CD4-positive, alpha-beta T cell (primary cell): ENCODE measurements at regions of chr16 and their contacts with region 1.

Region 1: DNA sequence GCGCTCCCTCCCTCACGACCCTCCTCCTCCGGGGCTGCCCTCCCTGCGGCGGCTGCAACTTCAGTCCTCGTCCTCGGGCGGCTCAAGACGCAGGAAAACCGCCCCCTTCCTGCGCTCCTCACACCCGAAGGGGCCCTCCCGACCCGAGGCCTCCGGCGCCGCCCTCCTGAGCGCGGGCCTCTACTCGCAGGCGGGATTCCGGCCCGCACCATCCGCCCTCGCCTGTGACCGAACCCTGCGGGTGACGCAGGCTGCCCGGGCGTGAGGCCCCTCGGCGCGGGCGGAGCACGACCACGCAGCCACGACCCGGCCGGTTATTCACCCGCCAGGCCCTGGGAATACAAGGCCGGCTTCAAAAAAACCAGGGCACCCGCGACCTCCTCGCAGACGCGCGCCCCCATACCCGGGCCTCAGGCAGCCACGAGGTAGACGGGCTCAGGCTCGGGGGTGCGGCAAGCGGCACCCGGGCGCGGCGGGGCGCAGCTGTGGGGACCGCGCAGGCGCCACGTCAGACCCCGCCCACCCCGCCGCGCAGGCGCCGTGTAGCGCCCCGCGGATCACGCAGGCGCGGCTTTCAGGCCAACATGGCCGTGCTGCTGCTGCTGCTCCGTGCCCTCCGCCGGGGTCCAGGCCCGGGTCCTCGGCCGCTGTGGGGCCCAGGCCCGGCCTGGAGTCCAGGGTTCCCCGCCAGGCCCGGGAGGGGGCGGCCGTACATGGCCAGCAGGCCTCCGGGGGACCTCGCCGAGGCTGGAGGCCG is at the start of gene SPG7:
- DNase-seq: peak; percentile 81 to 97 (median 90)
- ATAC-seq: peak; percentile 71
- H3K4me3 ChIP-seq: peak within 1 kb of the TSS; percentile 73
- H3K4me3 Mint-ChIP-seq: peak within 1 kb of the TSS; percentile 95
- H3K27ac ChIP-seq: peak within 1 kb of the TSS; percentile 79 to 81
- H3K27ac Mint-ChIP-seq: peak within 1 kb of the TSS; percentile 93
- H3K4me1 ChIP-seq: peaks cover 47% of the 10 kb centered on the region
- H3K4me1 Mint-ChIP-seq: peaks cover 42% of the 10 kb centered on the region
- H3K27me3 ChIP-seq: no peaks in the 10 kb centered on the region
- H3K27me3 Mint-ChIP-seq: no peaks in the 10 kb centered on the region
- CTCF ChIP-seq: no peak
- total RNA-seq, gene SPG7: 163 to 167 TPM

Region 2: DNA sequence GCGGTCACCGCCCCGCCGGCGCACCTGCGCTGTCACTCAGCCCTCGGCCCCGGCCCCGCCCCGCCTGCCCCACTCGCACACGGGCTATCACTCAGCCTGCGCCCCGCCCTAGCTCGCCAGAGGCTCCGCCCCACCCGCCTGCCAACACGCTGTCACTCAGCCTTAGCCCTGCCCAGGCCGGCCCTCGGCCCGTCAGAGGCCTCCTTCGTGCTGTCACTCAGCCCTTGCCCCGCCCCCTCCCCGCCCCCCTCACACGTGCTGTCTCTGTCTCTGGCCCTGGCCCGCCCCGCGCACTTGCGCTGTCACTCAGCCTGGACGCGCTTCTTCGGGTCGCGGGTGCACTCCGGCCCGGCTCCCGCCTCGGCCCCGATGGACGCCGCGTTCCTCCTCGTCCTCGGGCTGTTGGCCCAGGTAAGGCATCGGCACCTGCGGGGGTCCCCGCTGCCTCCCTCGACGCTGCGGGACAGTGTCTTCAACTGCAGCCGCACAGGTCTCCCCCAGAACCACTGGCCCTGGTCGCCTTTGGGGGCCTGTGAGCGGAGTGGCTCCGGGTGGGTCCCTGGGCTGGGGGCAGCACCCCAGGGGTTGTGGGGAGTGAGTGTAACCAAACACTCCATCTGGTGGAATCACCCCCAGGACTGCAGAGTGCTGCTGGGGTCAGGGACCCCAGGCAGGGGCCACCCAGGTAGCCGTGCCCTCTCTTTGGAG is 336.4 kb before region 1 on chr16 and contains the start of gene CDH15:
- CTCF ChIA-PET with region 1: no interaction called
- POLR2A ChIA-PET with region 1: no interaction called
- intact Hi-C with region 1: no loop called
- DNase-seq: peak; percentile 92 to 99 (median 95)
- ATAC-seq: peak; percentile 96
- H3K4me3 ChIP-seq: peak within 1 kb of the TSS; percentile 53
- H3K4me3 Mint-ChIP-seq: peak within 1 kb of the TSS; percentile 79
- H3K27ac ChIP-seq: no peak within 1 kb of the TSS
- H3K27ac Mint-ChIP-seq: no peak within 1 kb of the TSS
- H3K4me1 ChIP-seq: peaks cover 30% of the 10 kb centered on the region
- H3K4me1 Mint-ChIP-seq: peaks cover 8% of the 10 kb centered on the region
- H3K27me3 ChIP-seq: no peaks in the 10 kb centered on the region
- H3K27me3 Mint-ChIP-seq: peaks cover 4% of the 10 kb centered on the region
- CTCF ChIP-seq: no peak
- total RNA-seq, gene CDH15: not detected

Region 3: DNA sequence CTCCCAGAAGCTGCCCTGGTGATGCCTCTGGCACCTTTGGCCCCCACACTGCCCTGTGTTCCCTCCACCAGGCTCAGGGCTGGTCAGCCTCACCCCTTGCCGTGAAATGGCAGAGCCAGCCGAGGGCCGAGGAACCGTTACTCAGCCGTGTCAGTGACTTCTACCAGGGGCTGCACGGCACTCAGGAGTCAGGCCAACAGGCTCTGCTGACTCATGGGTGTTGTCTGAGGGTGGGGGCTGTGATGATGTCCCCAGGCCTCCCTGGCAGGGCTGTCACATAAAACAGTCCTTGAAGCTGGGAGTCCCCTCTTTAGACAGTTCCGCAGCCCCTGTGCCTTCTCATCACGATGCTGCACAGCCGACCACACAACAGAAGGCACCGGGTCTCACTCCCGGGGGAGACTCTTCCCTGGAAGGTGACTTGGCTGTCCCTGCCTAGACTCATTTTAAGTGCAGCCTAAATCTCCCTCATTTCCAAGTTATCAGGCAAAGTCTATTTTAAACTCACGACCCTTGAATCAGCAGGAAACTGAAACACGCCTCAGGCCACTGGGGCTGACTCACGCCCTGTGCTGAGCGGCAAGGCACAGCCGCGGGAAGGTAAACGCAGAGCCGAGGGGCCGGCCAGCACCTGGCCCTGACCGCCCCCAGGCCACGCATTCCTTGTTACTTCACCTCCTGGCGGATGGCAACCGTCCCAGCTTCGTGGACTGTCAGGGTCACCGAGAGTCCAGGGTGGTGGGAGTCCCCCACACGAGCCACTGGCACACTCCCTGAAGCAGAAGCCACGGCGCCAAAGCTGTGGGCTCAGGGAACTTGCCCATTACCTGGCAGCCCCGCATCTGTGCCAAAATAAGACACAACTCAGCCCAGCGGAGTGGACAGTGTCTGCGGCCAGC is 187.9 kb before region 1 on chr16:
- CTCF ChIA-PET with region 1: interaction called, 6 read pairs
- POLR2A ChIA-PET with region 1: interaction called, 16 read pairs
- intact Hi-C with region 1: loop called in 1 of 2 experiments (anchors 1 kb)
- DNase-seq: peak in 5 of 14 experiments; percentile 21 to 55 (median 45)
- ATAC-seq: no peak
- H3K4me3 ChIP-seq: no peak overlapping the region
- H3K4me3 Mint-ChIP-seq: peak overlapping the region; percentile 38
- H3K27ac ChIP-seq: no peak overlapping the region
- H3K27ac Mint-ChIP-seq: peak overlapping the region; percentile 98
- H3K4me1 ChIP-seq: peaks cover 100% of the 10 kb centered on the region
- H3K4me1 Mint-ChIP-seq: peaks cover 91% of the 10 kb centered on the region
- H3K27me3 ChIP-seq: no peaks in the 10 kb centered on the region
- H3K27me3 Mint-ChIP-seq: no peaks in the 10 kb centered on the region
- CTCF ChIP-seq: no peak

Region 4: DNA sequence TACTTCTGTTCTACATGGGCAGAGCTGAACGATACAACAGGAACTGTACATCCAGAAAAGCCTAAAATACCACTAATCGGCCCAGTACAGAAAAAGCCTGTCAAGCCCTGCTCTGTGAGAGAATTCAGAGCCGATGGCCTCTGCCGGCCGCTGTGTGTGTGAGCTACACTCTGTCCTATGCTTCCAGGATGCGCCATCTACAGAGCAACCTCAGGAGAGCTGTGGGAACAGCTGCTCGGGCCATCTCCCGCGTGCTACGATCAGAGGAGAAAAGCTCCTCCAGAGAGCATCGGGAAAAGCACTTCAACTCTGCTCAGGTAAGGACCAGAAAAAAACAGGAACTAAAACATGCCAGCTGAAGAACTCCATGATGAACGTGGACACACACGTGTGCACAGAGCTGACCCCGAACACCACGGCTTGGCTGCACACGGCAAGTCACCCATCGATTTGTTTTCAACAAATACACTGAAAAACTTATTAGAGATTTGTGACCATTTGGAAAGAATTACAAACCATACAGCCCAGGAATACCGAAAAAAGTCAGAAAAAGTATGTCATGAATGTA is 133.5 kb before region 1 on chr16:
- CTCF ChIA-PET with region 1: no interaction called
- POLR2A ChIA-PET with region 1: no interaction called
- intact Hi-C with region 1: no loop called
- DNase-seq: no peak
- ATAC-seq: no peak
- H3K4me3 ChIP-seq: no peak overlapping the region
- H3K4me3 Mint-ChIP-seq: no peak overlapping the region
- H3K27ac ChIP-seq: no peak overlapping the region
- H3K27ac Mint-ChIP-seq: peak overlapping the region; percentile 55
- H3K4me1 ChIP-seq: peaks cover 73% of the 10 kb centered on the region
- H3K4me1 Mint-ChIP-seq: peaks cover 89% of the 10 kb centered on the region
- H3K27me3 ChIP-seq: no peaks in the 10 kb centered on the region
- H3K27me3 Mint-ChIP-seq: no peaks in the 10 kb centered on the region
- CTCF ChIP-seq: no peak

Region 5: DNA sequence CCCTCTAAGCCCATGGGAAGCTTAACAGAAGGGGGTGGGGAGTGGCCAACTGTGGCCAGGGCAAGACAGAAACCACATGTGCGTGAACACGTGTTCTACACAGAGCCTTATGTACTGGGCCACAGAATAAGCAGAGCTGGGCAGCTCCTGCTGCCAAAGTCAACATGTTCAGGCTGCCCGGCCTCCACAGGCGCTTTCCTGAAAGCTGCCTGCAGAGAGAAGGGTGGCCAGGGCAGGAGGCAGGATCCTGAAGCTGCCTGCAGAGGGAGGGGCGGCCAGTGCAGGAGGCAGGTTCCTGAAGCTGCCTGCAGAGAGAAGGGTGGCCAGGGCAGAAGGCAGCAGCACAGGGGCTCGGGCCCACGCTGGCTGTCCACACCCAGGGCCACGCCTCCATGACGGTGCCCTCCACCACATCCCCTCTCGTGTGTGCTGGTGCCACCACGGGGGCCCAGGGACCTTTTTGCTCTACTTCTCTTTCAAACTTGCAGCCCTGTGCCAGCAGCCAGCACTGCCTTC is 97.2 kb before region 1 on chr16:
- CTCF ChIA-PET with region 1: interaction called, 8 read pairs
- POLR2A ChIA-PET with region 1: interaction called, 3 read pairs
- intact Hi-C with region 1: loop called in 1 of 2 experiments (anchors 1 kb)
- DNase-seq: peak in 5 of 14 experiments; percentile 28 to 54 (median 34)
- ATAC-seq: no peak
- H3K4me3 ChIP-seq: no peak overlapping the region
- H3K4me3 Mint-ChIP-seq: peak overlapping the region; percentile 54
- H3K27ac ChIP-seq: peak overlapping the region; percentile 34 to 69
- H3K27ac Mint-ChIP-seq: peak overlapping the region; percentile 95
- H3K4me1 ChIP-seq: peaks cover 92% of the 10 kb centered on the region
- H3K4me1 Mint-ChIP-seq: peaks cover 87% of the 10 kb centered on the region
- H3K27me3 ChIP-seq: no peaks in the 10 kb centered on the region
- H3K27me3 Mint-ChIP-seq: no peaks in the 10 kb centered on the region
- CTCF ChIP-seq: no peak

Region 6: GRCh38 chr16:89422527-89422904 is 85.5 kb before region 1 on chr16:
- CTCF ChIA-PET with region 1: no interaction called
- POLR2A ChIA-PET with region 1: no interaction called
- intact Hi-C with region 1: no loop called
- DNase-seq: peak in 3 of 14 experiments; percentile 51 to 72 (median 57)
- ATAC-seq: peak; percentile 23
- H3K4me3 ChIP-seq: no peak overlapping the region
- H3K4me3 Mint-ChIP-seq: peak overlapping the region; percentile 39
- H3K27ac ChIP-seq: no peak overlapping the region
- H3K27ac Mint-ChIP-seq: peak overlapping the region; percentile 45
- H3K4me1 ChIP-seq: peaks cover 86% of the 10 kb centered on the region
- H3K4me1 Mint-ChIP-seq: peaks cover 86% of the 10 kb centered on the region
- H3K27me3 ChIP-seq: no peaks in the 10 kb centered on the region
- H3K27me3 Mint-ChIP-seq: no peaks in the 10 kb centered on the region
- CTCF ChIP-seq: no peak

Region 7: GRCh38 chr16:89484923-89485679 is 22.9 kb before region 1 on chr16:
- CTCF ChIA-PET with region 1: interaction called, 7 read pairs
- POLR2A ChIA-PET with region 1: interaction called, 40 read pairs
- intact Hi-C with region 1: loop called (anchors 1 kb)
- DNase-seq: peak in 5 of 14 experiments; percentile 15 to 70 (median 60)
- ATAC-seq: no peak
- H3K4me3 ChIP-seq: peak overlapping the region; percentile 24
- H3K4me3 Mint-ChIP-seq: peak overlapping the region; percentile 89
- H3K27ac ChIP-seq: peak overlapping the region; percentile 25 to 79
- H3K27ac Mint-ChIP-seq: peak overlapping the region; percentile 97
- H3K4me1 ChIP-seq: peaks cover 81% of the 10 kb centered on the region
- H3K4me1 Mint-ChIP-seq: peaks cover 89% of the 10 kb centered on the region
- H3K27me3 ChIP-seq: no peaks in the 10 kb centered on the region
- H3K27me3 Mint-ChIP-seq: no peaks in the 10 kb centered on the region
- CTCF ChIP-seq: no peak

Region 8: DNA sequence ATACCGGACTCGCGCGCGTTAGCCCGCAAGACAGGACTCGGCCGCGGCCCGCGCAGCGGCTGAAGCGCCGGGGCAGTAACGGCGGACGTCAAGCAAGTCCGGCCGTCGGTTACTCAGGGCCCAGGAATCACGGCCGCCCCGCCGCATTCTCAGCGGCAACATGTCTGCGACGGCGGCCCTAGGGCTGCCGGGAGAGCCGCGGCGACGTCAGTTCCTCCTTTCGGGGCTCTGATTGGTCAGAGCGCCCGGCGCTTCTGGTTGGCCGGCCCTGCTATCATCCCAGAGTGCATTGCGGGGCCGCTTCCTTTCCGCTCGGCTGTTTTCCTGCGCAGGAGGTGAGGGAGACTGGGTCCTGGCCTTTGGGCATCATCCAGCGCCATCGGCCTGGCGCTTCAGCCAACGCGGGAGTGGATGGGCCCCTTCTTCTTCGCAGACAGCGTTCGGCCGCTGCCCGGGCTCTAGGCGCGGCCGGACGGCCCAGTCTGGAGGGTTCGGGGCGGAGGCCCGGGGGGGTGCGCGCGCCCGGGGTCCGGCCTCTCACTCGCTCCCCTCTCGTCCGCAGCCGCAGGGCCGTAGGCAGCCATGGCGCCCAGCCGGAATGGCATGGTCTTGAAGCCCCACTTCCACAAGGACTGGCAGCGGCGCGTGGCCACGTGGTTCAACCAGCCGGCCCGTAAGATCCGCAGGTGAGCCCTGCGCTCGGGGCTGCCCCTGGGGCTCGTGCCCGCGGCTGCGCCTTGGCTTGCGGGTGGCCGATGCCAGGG is 52.5 kb after region 1 on chr16 and contains the start of gene RPL13:
- CTCF ChIA-PET with region 1: interaction called, 8 read pairs
- POLR2A ChIA-PET with region 1: interaction called, 5 read pairs
- intact Hi-C with region 1: loop called (anchors 1 kb)
- DNase-seq: peak; percentile 86 to 97 (median 91)
- ATAC-seq: peak; percentile 88
- H3K4me3 ChIP-seq: peak within 1 kb of the TSS; percentile 75
- H3K4me3 Mint-ChIP-seq: peak within 1 kb of the TSS; percentile 97
- H3K27ac ChIP-seq: peak within 1 kb of the TSS; percentile 82 to 90
- H3K27ac Mint-ChIP-seq: peak within 1 kb of the TSS; percentile 99
- H3K4me1 ChIP-seq: peaks cover 68% of the 10 kb centered on the region
- H3K4me1 Mint-ChIP-seq: peaks cover 56% of the 10 kb centered on the region
- H3K27me3 ChIP-seq: peaks cover 0 to 3% of the 10 kb centered on the region in 2 experiments
- H3K27me3 Mint-ChIP-seq: no peaks in the 10 kb centered on the region
- CTCF ChIP-seq: no peak
- total RNA-seq, gene RPL13: 4,971 to 5,051 TPM